Activated CD4-positive, alpha-beta T cell treated with anti-CD3 and anti-CD28 coated beads, Interleukin-2, amount 10 ng/mL, durations not matched to agents 24 days and 14 days (primary cell): ENCODE measurements at regions of chr15 and their contacts with region 1.

Region 1: DNA sequence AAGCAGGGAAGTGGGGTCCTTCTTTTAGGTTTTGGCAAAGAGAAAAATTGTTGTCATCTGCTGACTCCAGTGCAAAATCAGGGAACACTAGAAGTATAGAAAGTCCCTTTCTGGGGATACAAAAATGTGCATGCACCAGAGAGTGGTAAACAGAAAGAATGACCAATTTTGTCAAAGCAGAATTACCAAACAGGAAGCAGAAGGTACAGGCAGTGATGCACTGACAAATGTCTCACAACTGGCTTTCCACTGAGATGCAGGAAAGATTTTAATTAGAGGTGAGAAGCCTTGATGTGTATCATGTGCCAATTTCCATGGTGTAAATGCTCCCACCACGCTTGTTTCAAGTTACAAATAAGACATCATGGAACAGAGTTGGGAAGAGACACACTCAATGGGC is 66.0 kb downstream of the TRIM69 start:
- DNase-seq: no peak
- H3K4me3 Mint-ChIP-seq: no peak overlapping the region
- H3K27ac Mint-ChIP-seq: peak overlapping the region; percentile 15
- H3K4me1 Mint-ChIP-seq: peaks cover 9% of the 10 kb centered on the region
- H3K27me3 Mint-ChIP-seq: no peaks in the 10 kb centered on the region

Region 2: DNA sequence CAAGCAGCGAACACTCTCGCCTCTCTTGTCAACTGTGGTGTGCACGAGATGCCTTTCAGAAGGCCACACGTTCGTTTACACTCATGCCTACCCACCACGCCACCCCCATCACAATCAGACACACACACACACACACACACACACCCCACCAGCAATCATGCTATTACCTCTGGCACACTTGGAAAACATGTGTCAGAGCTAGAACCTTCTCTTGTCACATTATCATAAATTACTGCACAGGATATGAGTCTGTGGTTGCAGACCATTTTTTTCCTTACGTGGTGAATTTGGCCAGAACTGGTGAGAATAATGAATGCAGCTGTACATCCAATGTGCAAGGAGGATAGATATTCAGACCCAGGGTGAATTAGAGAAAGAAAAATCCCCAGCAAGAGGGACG is 13.6 kb before region 1 on chr15:
- intact Hi-C with region 1: loop called (anchors 2 kb)
- DNase-seq: peak; percentile 75
- H3K4me3 Mint-ChIP-seq: peak overlapping the region; percentile 21
- H3K27ac Mint-ChIP-seq: peak overlapping the region; percentile 92
- H3K4me1 Mint-ChIP-seq: peaks cover 33% of the 10 kb centered on the region
- H3K27me3 Mint-ChIP-seq: no peaks in the 10 kb centered on the region

Region 3: DNA sequence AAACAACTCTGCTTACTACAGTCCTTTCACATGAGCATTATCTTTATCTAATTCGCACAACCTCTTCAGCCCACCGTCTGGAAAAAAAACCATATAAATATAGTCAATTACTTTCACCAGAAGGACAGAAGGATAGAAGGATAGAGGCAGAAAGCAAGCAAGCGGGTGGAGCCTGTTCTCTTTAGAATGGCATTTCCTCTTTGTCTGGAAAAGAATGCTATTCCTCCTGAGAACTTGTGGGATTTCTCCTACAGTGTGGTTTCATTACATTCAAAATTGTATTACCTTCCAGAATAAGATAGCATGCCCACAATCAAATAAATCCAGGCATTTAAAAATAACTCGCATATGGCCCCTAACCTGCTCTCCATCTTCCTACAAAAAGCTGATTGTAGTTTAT is 697.1 kb after region 1 on chr15:
- intact Hi-C with region 1: no loop called
- DNase-seq: peak; percentile 28
- H3K4me3 Mint-ChIP-seq: no peak overlapping the region
- H3K27ac Mint-ChIP-seq: no peak overlapping the region
- H3K4me1 Mint-ChIP-seq: no peaks in the 10 kb centered on the region
- H3K27me3 Mint-ChIP-seq: no peaks in the 10 kb centered on the region